ENCODE measurements at regions of chr9 and their contacts with region 1.

Region 1: DNA sequence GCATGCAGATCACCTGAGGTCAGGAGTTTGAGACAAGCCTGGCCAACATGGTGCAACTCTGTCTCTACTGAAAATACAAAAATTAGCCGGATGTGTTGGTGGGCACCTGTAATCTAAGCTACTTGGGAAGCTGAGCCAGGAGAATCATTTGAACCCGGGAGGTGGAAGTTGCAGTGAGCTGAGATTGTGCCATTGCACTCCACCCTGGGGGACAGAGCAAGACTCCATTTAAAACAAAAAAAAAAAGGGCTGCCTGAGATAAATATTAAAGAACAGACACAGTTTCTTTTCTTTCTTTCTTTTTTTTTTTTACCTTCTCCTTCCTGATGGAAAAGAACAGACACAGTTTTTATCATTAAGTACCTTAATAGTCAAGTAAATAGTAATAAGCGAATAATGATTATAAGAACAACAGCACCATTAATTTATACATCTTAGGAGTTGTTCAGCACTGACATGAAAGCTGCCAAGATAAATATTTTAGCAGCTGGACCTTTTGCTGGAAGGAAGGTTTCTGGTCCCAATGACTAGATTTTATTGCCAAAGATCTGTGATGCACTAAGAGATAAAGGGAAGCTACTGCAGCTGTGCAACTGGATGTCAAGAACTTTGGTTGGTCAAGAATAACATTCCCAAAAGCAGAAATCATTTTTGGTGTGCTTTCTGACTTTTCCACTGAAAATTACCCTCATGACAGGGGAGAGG is 7.0 kb downstream of the CENPP start:
- DNase-seq: peak; percentile 30
- H3K4me3 ChIP-seq: no peak overlapping the region
- H3K27ac ChIP-seq: peak overlapping the region; percentile 12 to 19; a peak in 2 of 4 replicates
- H3K4me1 ChIP-seq: peaks cover 4 to 6% of the 10 kb centered on the region in 2 experiments; a peak in 3 of 4 replicates
- H3K27me3 ChIP-seq: no peaks in the 10 kb centered on the region
- CTCF ChIP-seq: no peak
- EP300 ChIP-seq: peak in 1 of 2 experiments; percentile 56; a peak in 1 of 4 replicates
- RAD21 ChIP-seq: no peak

Region 2: GRCh38 chr9:92342825-92343488 is 10.2 kb after region 1 on chr9:
- CTCF ChIA-PET with region 1: interaction called, 17 read pairs
- POLR2A ChIA-PET with region 1: no interaction called
- DNase-seq: no peak
- H3K4me3 ChIP-seq: no peak overlapping the region
- H3K27ac ChIP-seq: peak overlapping the region in 1 of 2 experiments; percentile 87; a peak in 1 of 4 replicates
- H3K4me1 ChIP-seq: peaks cover 0 to 4% of the 10 kb centered on the region in 2 experiments; a peak in 2 of 4 replicates
- H3K27me3 ChIP-seq: no peaks in the 10 kb centered on the region
- CTCF ChIP-seq: peak; percentile 55
- EP300 ChIP-seq: no peak
- RAD21 ChIP-seq: peak; percentile 44